Gastrocnemius medialis (tissue), 4 donors: ENCODE measurements at regions of chr11 and their contacts with region 1.

Region 1: DNA sequence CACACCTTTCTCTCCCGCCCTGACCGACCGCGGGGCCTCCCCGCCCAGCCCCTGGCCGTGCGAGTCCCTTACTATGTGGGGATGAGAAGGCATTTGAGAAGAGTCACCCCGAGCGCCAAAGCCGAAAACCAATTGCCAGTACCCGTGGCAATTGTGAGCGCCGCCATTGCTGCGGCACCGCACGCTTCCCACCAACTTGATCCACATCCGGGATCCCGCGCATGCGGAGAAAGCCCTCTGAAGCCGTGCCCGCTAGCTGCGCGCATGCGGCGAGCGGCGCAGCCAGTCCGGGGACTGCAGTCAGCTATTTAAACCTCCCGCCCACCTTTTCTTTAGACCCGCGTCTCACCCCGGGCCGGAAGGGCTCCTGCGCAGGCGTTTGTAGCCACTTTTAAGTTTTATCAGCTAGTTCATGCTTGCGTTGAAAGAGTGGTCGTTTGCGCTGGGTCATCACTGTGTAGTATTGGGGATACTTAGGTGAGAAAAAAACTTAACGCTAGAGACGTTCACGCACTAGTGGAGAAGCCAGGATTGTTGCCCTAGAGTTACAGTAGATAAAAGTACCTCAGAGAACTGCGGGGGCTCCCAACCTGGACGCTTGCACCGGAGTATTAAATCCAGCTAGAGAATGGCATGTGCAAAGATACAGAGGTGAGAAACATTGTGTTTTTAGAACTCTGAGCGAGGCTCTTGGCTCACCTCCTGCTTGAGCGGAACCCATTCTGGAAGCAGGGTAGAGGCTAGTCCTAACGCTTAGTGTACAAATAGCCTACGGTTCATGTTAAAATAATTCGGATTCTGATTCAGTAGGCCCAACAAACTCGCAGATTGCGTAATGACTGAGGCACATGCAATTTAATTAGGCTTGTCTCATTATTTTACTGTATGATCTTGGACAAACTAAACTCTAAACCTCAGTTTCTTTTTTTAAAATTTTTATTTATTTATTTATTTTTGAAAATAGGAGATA is at the start of gene ALG8:
- DNase-seq: peak; percentile 89 to 94
- ATAC-seq: peak; percentile 99
- H3K4me3 ChIP-seq: peak within 1 kb of the TSS; percentile 71 to 97 (median 90)
- H3K27ac ChIP-seq: peak within 1 kb of the TSS; percentile 72 to 87 (median 80)
- H3K4me1 ChIP-seq: peaks cover 15 to 18% of the 10 kb centered on the region in 2 donors
- H3K27me3 ChIP-seq: no peaks in the 10 kb centered on the region
- CTCF ChIP-seq: no peak
- POLR2A ChIP-seq: peak; percentile 34 to 56
- total RNA-seq, gene ALG8: 9.0 to 12.9 (median 10.9) TPM

Region 2: GRCh38 chr11:77736473-77736872 is 403.2 kb before region 1 on chr11:
- in situ Hi-C with region 1: no loop called
- intact Hi-C with region 1: no loop called
- DNase-seq: no peak
- ATAC-seq: no peak
- H3K4me3 ChIP-seq: no peak overlapping the region
- H3K27ac ChIP-seq: no peak overlapping the region
- H3K4me1 ChIP-seq: no peaks in the 10 kb centered on the region
- H3K27me3 ChIP-seq: no peaks in the 10 kb centered on the region
- CTCF ChIP-seq: no peak
- POLR2A ChIP-seq: no peak

Region 3: GRCh38 chr11:77994412-77995362 is 145.0 kb before region 1 on chr11 and contains the start of gene INTS4:
- in situ Hi-C with region 1: no loop called
- intact Hi-C with region 1: loop called (anchors 1 kb)
- DNase-seq: peak; percentile 99
- ATAC-seq: peak; percentile 97 to 99
- H3K4me3 ChIP-seq: peak within 1 kb of the TSS; percentile 70 to 92 (median 78)
- H3K27ac ChIP-seq: peak within 1 kb of the TSS; percentile 80 to 90 (median 87)
- H3K4me1 ChIP-seq: peaks cover 19 to 20% of the 10 kb centered on the region in 2 donors
- H3K27me3 ChIP-seq: no peaks in the 10 kb centered on the region
- CTCF ChIP-seq: no peak
- POLR2A ChIP-seq: peak; percentile 22 to 59
- total RNA-seq, gene INTS4: 10.0 to 13.8 (median 11.9) TPM

Region 4: DNA sequence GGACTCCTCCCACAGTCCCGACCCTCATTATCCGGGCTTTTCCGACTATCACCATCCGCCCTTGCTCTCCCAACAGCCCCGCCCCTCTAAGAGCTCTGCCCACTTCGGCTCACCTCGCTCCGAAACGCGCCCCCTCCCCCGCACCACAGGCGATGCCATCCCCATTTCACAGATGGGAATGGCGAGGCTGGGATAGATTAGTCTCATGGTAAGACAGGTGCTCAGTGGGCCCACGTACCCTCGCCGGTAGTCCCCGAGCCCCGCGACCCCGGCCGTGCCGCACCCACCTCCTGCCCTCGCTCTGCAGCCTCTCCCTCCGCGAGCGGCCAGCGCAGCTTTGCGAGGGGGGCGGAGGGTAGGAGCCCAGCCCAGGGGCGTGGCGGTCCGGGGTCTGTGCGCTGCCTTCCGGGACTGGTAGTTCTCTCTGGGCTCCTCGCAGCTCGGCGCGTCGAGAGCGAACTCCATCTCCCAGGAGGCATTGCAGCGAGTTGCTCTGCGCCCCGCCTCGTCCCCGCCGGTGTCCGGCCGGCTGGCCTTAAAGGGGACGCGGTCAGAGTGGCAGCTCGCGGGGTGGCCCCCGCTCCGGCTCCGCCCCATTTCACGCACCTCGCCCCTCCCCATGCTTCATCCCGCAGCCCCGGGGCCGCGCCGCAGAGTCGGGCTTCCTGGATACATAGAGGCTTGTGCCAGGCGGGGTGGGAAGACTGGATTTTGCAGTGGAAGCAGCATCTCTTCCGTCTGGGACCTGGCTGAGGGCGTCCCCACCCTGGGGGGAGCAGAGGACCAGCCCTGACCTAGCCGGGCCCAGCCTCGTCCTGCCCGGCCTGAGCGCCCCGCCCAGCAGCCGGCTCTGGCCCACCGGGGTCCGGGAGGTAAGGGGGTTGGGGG is 48.8 kb after region 1 on chr11 and contains the starts of genes KCTD21 and USP35:
- in situ Hi-C with region 1: no loop called
- intact Hi-C with region 1: loop called (anchors 1 kb)
- DNase-seq: peak; percentile 96
- ATAC-seq: peak; percentile 88 to 92
- H3K4me3 ChIP-seq: peak within 1 kb of the TSS; percentile 63 to 100 (median 99)
- H3K27ac ChIP-seq: peak within 1 kb of the TSS; percentile 71 to 94 (median 86)
- H3K4me1 ChIP-seq: peaks cover 37 to 49% of the 10 kb centered on the region in 2 donors
- H3K27me3 ChIP-seq: no peaks in the 10 kb centered on the region
- CTCF ChIP-seq: no peak
- POLR2A ChIP-seq: peak; percentile 80 to 90
- total RNA-seq, gene KCTD21: 6.0 to 18.9 (median 15.8) TPM
- total RNA-seq, gene USP35: 4.6 to 6.1 (median 5.4) TPM

Region 5: GRCh38 chr11:78564490-78565467 is 425.1 kb after region 1 on chr11:
- in situ Hi-C with region 1: loop called in 3 of 4 experiments (anchors 25 kb)
- intact Hi-C with region 1: loop called (anchors 5 kb)
- DNase-seq: no peak
- ATAC-seq: no peak
- H3K4me3 ChIP-seq: no peak overlapping the region
- H3K27ac ChIP-seq: no peak overlapping the region
- H3K4me1 ChIP-seq: peaks cover 4 to 11% of the 10 kb centered on the region in 2 donors
- H3K27me3 ChIP-seq: no peaks in the 10 kb centered on the region
- CTCF ChIP-seq: peak; percentile 50 to 78 (median 60)
- POLR2A ChIP-seq: no peak